ENCODE measurements at regions of chrX and their contacts with region 1.

Region 1: GRCh38 chrX:149648932-149649331 is 17.3 kb upstream of the TMEM185A start:
- DNase-seq: no peak
- ATAC-seq: no peak

Region 2: GRCh38 chrX:149568701-149569296 is 80.1 kb before region 1 on chrX:
- intact Hi-C with region 1: loop called in 1 of 2 experiments (anchors 10 kb)
- DNase-seq: no peak
- ATAC-seq: no peak